Activated CD4-positive, alpha-beta memory T cell treated with anti-CD3 and anti-CD28 coated beads for 36 hours (primary cell): ENCODE measurements at regions of chr3 and their contacts with region 1.

Region 1: DNA sequence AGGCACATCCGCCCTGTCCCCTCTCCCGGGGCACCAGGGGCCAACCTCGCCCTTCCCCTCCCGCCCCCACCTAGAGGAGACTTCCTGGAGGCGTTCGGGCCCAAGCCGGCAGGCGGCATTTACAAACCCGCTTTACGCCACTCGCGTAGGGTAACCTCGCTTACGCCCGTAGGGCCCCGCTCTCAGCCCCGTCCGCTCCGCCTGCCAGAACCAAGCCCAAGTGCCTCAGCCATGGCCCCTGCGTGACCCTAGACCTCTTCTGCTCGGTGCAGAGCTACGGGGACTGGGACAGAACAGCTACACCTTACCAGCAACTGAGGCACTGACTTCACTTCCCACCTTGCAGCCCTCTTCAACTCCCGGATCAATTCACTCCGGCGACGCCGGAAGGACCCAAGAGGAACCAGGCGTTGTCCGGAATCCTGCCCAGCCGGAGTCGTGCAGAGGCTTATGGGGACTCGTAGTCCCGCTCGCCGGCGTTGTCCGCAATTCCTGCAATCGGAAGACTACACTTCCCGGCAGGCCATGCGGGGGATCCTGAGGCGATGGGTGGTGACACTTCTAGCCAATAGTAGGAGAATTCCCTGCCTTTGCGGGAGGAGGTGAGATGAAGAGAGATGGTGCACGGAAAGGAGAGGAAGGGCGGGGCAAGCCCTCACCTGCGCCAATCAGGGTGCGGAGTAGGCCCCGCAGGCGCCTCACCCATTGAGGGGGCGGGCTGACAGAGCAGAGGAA is at the start of gene PDCD10:
- DNase-seq: peak; percentile 98
- H3K4me3 Mint-ChIP-seq: no peak within 1 kb of the TSS
- H3K27ac Mint-ChIP-seq: no peak within 1 kb of the TSS
- H3K4me1 Mint-ChIP-seq: peaks cover 37% of the 10 kb centered on the region
- H3K27me3 Mint-ChIP-seq: no peaks in the 10 kb centered on the region
- total RNA-seq, gene PDCD10: 75.4 to 81.1 TPM

Region 2: DNA sequence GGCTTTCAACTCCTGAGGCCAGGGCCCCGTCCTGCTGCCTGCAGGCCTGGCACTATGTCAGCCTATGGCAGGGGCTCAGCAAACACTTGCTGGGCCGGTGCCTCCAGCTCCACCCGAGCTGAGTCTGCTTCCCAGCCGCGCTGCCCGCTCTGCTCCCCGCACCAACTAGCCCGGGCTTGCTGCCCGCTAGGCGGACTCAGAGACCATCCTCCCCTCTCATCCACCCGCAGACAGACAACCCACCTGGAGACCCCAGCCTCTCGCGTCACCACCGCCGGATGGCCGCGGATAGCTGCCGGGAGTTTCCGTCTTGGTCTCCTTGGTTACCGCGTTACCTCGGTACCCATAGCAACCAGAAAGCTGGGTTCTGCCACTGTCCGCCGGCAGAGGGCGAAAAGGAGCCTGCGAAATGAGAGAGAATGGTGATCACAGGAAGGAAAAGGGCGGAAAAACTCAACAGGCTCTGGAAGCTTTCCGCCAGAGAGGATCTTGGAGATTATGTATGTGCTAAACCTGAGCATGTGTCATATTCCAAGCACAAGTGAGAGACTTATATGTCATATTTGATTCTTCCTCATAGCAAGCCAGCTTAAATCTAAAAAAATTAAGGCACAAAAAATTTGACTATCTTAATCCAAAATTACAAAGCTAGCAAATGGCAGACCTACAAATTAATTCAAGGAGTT is 354.5 kb before region 1 on chr3 and contains the start of gene ZBBX:
- CTCF ChIA-PET with region 1: interaction called, 7 read pairs
- POLR2A ChIA-PET with region 1: no interaction called
- intact Hi-C with region 1: loop called (anchors 2 kb)
- DNase-seq: peak; percentile 89
- H3K4me3 Mint-ChIP-seq: peak within 1 kb of the TSS; percentile 77
- H3K27ac Mint-ChIP-seq: no peak within 1 kb of the TSS
- H3K4me1 Mint-ChIP-seq: peaks cover 8% of the 10 kb centered on the region
- H3K27me3 Mint-ChIP-seq: peaks cover 8% of the 10 kb centered on the region
- total RNA-seq, gene ZBBX: not detected

Region 3: DNA sequence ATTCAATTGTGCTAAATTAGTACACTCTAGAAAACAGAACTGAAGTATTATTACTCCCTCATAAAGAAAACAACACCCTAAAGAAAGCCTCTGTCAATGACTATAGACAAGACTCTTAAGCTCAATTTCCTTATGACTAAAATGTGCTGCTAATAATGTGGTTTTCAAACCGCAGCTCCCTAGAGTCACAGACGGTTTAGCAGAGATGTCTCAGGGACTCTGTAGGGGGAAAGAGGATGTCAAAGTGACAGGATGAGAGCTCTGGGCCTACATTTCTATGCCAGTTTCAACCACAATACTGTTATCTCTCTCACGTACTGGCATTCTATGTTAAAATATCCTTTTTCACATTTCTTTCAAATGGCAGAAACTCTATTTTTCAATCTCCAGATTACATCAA is 43.3 kb before region 1 on chr3:
- CTCF ChIA-PET with region 1: interaction called, 3 read pairs
- POLR2A ChIA-PET with region 1: interaction called, 5 read pairs
- intact Hi-C with region 1: loop called (anchors 1 kb)
- DNase-seq: peak; percentile 41
- H3K4me3 Mint-ChIP-seq: no peak overlapping the region
- H3K27ac Mint-ChIP-seq: peak overlapping the region; percentile 18
- H3K4me1 Mint-ChIP-seq: peaks cover 31% of the 10 kb centered on the region
- H3K27me3 Mint-ChIP-seq: no peaks in the 10 kb centered on the region

Region 4: GRCh38 chr3:167813169-167814123 is 78.8 kb after region 1 on chr3:
- CTCF ChIA-PET with region 1: no interaction called
- POLR2A ChIA-PET with region 1: no interaction called
- intact Hi-C with region 1: no loop called
- DNase-seq: no peak
- H3K4me3 Mint-ChIP-seq: no peak overlapping the region
- H3K27ac Mint-ChIP-seq: no peak overlapping the region
- H3K4me1 Mint-ChIP-seq: no peaks in the 10 kb centered on the region
- H3K27me3 Mint-ChIP-seq: no peaks in the 10 kb centered on the region

Region 5: GRCh38 chr3:167882067-167882667 is 147.5 kb after region 1 on chr3:
- CTCF ChIA-PET with region 1: interaction called, 6 read pairs
- POLR2A ChIA-PET with region 1: no interaction called
- intact Hi-C with region 1: loop called (anchors 5 kb)
- DNase-seq: no peak
- H3K4me3 Mint-ChIP-seq: no peak overlapping the region
- H3K27ac Mint-ChIP-seq: no peak overlapping the region
- H3K4me1 Mint-ChIP-seq: peaks cover 3% of the 10 kb centered on the region
- H3K27me3 Mint-ChIP-seq: peaks cover 11% of the 10 kb centered on the region

Region 6: DNA sequence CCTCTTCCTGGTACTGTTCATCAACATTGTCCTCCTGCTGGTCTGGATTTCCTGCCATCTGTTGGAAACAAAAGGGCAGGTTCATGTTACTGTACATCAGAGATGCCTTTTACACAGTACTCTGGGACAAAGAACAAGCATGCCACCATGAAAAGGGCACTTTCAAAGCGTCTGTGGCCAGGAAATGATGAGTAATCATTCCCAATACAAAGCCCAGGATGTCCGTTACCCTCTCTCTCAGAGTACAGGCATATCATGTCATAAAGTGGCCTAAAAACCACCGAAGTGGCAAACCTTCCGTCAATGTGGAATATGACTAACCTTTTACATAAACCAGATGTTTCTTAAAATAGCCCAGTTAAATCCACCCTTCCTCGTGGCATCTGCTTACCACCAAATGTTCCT is 289.9 kb after region 1 on chr3:
- CTCF ChIA-PET with region 1: no interaction called
- POLR2A ChIA-PET with region 1: no interaction called
- intact Hi-C with region 1: loop called (anchors 10 kb)
- DNase-seq: peak; percentile 24
- H3K4me3 Mint-ChIP-seq: no peak overlapping the region
- H3K27ac Mint-ChIP-seq: peak overlapping the region; percentile 10
- H3K4me1 Mint-ChIP-seq: peaks cover 12% of the 10 kb centered on the region
- H3K27me3 Mint-ChIP-seq: peaks cover 4% of the 10 kb centered on the region